Right ventricle myocardium inferior (tissue), 1 donor: ENCODE measurements at regions of chr16 and their contacts with region 1.

Region 1: DNA sequence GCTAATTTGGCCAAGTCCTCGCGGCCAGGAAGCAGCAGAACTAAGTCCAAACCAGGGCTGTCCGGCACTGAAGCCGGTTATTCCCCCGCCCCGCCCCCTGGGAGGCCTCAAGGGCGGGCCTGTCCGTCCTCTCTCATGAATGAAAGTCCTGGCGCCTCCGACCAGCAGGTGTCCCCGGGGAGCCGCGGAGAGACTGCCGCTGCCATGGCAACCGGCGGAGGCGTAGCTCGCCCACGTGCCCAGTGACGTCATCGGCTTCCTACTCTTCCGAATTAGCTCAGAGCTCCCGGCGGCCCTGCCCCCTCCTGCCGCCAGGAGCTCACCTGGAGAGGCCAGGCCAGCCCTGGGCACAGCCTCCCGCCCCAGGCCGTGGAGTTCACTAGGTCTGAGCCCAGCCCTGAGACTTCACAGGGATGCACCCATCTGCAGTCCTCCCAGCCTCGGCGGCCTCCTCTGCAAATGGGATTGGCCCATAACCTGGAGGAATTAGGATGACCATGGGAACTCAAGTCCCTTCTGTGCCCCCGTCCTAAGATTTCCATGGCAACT is 1.3 kb downstream of the SPATA2L start:
- DNase-seq: peak; percentile 100
- ATAC-seq: peak; percentile 80

Region 2: DNA sequence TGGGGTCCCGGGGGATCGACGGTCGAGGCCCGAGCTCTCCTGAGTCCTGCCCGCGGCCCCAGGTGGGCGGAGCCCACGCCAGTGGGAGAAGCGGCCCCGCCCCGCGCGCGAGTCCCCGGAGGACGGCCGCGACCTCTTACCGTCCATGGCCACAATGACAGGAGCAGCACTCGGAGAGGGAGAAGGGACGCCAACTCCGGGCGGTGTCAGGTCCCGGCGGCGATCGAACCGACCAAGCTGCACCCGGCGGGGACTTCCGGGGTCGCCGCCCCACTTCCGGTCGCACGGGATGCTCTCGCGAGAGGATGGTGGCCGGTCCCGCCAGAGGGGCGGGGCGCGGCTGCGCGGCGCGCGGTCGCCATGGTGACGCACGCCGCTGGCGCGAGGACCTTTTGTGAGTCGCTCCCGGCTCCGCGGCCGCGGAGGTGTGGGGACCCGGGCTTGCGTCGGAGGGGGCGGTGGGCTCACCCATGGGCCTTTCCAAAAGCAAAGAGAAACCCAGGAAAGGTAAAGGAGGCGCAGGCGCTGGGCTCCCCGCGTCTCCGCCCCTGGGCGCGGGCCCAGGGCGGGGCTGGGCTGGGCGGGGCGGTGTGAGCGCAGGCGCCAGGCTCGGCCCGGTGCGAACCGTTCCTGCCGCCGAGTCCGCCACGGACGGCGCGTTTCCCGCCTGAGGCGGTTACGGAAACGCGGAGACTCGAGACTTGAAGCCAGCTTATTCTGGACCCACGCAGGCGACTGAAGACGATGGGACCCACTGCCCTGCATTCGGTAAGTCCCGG is 42.5 kb before region 1 on chr16 and contains the starts of genes CHMP1A and SPATA33:
- intact Hi-C with region 1: loop called (anchors 5 kb)
- DNase-seq: peak; percentile 95
- ATAC-seq: peak; percentile 98
- total RNA-seq, gene CHMP1A: 40.6 TPM
- total RNA-seq, gene SPATA33: 1.6 TPM

Region 3: GRCh38 chr16:89798832-89799370 is 98.7 kb after region 1 on chr16:
- intact Hi-C with region 1: loop called (anchors 5 kb)
- DNase-seq: no peak
- ATAC-seq: peak; percentile 87

Region 4: DNA sequence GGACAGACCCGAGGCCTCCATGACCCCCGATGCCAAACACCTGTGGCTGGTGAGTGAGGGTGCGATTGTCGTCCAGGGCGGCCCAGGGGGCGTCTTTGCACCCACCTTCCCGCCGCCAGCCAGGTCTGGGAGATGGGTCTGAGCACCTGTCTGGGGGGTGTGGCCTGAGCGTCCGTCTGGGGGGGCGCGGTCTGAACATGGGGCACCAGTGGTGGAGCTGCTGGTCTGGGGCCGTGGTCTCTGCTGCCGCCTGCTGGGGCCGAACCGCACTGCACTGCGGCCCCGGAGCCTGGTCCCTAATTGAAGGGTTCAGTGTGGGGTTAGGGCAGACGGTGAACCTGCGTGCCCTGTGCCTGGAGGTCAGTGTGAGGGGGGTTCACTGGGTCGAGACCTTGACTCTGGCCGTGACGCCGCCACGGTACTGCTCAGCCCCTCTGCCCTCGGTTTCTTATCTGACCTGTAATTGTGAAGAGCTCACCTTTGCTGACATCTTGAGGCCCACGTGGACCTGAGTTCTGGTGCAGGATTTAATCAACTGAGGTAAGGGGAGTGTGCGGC is 160.7 kb after region 1 on chr16:
- intact Hi-C with region 1: loop called (anchors 5 kb)
- DNase-seq: peak; percentile 87
- ATAC-seq: peak; percentile 55